ENCODE measurements at regions of chr20 and their contacts with region 1.

Region 1: DNA sequence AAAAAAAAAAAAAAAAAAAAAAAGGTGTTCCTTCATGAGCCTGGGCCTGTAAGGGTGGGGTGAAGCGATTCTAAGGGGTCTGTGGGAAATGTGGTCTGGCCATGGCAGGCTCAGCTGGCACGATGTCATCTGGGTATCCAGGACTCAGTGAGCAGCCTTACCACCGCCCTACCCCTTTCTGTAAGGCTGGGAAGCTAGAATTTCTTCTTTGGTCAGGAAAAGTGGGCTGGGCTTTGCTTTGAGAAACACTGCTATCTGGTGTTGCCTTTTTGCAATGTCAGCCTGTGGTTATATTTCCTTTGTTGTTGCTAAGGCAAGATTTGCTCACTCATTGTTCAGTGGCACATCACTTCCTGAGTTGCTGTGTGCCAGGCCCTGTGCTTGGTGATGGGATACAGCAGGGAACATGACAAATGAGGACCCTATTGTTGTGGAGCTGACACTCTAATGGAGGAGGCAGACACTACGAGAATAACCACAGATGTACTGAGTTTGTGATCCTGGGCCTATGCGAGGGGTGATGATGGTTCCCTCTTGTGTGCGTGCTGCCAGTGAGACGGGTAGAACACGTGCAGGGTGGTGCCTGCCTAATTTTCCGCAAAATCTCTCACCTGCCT is 45.9 kb upstream of the ZNFX1 start:
- DNase-seq: no peak
- ATAC-seq: peak; percentile 56
- H3K4me3 ChIP-seq: no peak overlapping the region
- H3K27ac ChIP-seq: no peak overlapping the region
- H3K4me1 ChIP-seq: no peaks in the 10 kb centered on the region
- H3K27me3 ChIP-seq: peaks cover 11% of the 10 kb centered on the region
- CTCF ChIP-seq: peak; percentile 47

Region 2: DNA sequence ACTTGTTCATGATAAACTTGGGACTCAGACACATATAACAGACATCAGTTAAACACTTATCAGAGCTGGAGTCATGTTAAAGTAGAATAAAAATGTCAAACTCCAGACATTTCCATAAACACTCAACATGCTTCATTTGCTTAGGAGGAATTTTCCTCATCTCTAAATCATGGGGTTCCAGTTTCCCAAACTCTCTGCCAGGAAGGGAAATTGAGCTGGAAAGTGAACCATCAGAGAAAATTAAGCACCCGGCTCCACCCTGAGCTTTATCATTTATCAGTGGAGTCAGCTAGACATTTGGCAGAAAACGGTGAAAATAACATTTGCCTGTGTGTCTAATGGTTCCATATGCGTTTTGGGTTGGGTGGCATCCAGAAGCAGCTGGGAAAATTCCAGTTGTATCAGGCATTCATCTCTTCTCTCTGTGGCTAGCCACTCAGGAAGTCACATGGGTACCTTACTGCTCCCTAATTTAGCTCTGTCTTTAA is 20.6 kb before region 1 on chr20:
- CTCF ChIA-PET with region 1: no interaction called
- POLR2A ChIA-PET with region 1: no interaction called
- in situ Hi-C with region 1: no loop called
- intact Hi-C with region 1: no loop called
- DNase-seq: no peak
- ATAC-seq: no peak
- H3K4me3 ChIP-seq: no peak overlapping the region
- H3K27ac ChIP-seq: no peak overlapping the region
- H3K4me1 ChIP-seq: no peaks in the 10 kb centered on the region
- H3K27me3 ChIP-seq: no peaks in the 10 kb centered on the region
- CTCF ChIP-seq: no peak

Region 3: GRCh38 chr20:49526056-49526455 is 202.3 kb after region 1 on chr20:
- CTCF ChIA-PET with region 1: no interaction called
- POLR2A ChIA-PET with region 1: interaction called, 14 read pairs
- in situ Hi-C with region 1: no loop called
- intact Hi-C with region 1: no loop called
- DNase-seq: no peak
- ATAC-seq: no peak
- H3K4me3 ChIP-seq: no peak overlapping the region
- H3K27ac ChIP-seq: no peak overlapping the region
- H3K4me1 ChIP-seq: no peaks in the 10 kb centered on the region
- H3K27me3 ChIP-seq: no peaks in the 10 kb centered on the region
- CTCF ChIP-seq: no peak

Region 4: DNA sequence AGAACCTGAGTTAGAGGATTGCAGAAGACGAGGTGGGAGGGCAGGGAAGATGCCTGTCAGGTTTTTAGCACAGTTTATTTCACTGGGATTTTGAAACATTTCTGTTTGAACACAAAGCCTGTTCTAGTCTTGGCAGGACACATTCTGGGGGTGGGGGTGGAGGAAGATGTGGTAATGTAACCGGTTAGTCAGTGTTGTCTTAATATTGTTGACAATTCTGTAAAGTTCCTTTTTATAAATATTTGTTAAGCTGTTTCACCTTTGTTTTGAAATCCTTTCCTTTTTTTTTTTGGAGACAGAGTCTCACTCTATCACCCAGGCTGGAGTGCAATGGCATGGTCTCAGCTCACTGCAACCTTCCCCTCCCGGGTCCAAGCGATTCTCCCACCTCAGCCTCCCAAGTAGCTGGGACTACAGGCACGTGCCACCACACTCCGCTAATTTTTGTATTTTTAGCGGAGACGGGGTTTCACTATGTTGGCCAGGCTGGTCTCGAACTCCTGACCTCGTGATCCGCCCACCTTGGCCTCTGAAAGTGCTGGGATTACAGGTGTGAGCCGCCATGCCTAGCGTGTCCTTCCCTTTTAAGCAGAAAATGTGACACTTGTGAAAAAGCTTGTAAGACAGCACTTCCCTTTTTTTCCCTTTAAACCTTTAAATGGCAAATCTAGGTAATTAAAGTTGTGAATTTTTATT is 509.1 kb after region 1 on chr20:
- CTCF ChIA-PET with region 1: no interaction called
- POLR2A ChIA-PET with region 1: interaction called, 17 read pairs
- in situ Hi-C with region 1: no loop called
- intact Hi-C with region 1: no loop called
- DNase-seq: no peak
- ATAC-seq: no peak
- H3K4me3 ChIP-seq: no peak overlapping the region
- H3K27ac ChIP-seq: no peak overlapping the region
- H3K4me1 ChIP-seq: no peaks in the 10 kb centered on the region
- H3K27me3 ChIP-seq: no peaks in the 10 kb centered on the region
- CTCF ChIP-seq: no peak